ENCODE measurements at regions of chr1 and their contacts with region 1.

Region 1: DNA sequence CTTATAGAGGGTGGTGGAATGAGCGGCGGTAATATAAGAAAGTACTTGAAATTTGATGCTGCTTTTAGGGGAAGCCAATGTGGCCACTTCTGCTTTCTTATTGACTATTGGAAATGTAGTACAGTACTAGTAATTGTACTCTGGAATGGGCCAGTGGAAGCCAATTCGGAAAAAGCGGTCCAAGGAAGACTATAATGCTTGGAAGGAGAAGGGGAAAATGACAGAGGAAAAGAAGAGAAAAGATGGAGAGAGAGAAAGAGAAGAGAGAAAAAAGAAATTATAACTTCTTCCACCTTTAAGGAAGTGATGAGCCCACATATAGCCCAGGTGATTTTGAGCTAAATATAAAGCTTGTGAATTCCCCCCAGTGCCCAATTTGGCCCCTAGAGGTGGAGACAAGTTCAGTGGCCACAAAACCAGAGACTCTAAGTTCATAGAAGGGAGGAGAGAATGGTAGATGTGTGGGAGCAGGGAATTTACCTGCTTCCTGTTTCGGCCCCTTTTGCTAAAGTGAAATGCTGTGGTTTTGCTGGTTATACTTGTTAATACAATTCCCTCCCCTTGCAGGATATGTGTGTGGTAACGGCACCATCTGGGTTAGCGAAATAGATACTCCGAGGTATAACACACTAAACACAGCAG is 35.7 kb upstream of the DUSP10 start:
- DNase-seq: peak in 7 of 9 donors; percentile 14 to 58 (median 32)
- ATAC-seq: peak; percentile 79
- H3K4me3 ChIP-seq: peak overlapping the region; percentile 19
- H3K4me3 Mint-ChIP-seq: peak overlapping the region; percentile 1 to 82 (median 56)
- H3K27ac ChIP-seq: no peak overlapping the region
- H3K27ac Mint-ChIP-seq: peak overlapping the region; percentile 56 to 90 (median 74)
- H3K4me1 ChIP-seq: peaks cover 37 to 38% of the 10 kb centered on the region in 2 donors
- H3K4me1 Mint-ChIP-seq: peaks cover 40 to 83% (median 51%) of the 10 kb centered on the region in 7 donors
- H3K27me3 ChIP-seq: no peaks in the 10 kb centered on the region
- H3K27me3 Mint-ChIP-seq: no peaks in the 10 kb centered on the region

Region 2: DNA sequence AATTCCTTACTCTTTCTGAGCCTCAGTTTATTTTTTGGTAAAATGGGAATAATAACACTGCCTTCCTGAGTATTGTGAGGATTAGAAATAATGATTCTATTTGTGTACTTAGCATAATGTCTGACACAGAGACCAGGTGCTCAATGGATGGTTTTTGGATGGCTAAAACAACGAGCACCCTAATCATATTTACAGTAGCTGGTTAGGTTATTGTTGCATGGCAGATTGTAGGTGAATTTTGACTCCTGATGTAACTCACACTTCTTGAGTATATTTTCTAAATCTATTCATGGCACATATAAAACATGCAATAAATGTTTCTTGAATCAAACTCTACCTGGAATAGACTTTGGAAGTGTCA is 23.7 kb before region 1 on chr1:
- CTCF ChIA-PET with region 1: no interaction called
- POLR2A ChIA-PET with region 1: no interaction called
- intact Hi-C with region 1: loop called in 1 of 2 experiments (anchors 1 kb)
- DNase-seq: no peak
- ATAC-seq: no peak
- H3K4me3 ChIP-seq: no peak overlapping the region
- H3K4me3 Mint-ChIP-seq: peak overlapping the region in 1 of 10 donors; percentile 67
- H3K27ac ChIP-seq: no peak overlapping the region
- H3K27ac Mint-ChIP-seq: peak overlapping the region in 1 of 9 donors; percentile 60
- H3K4me1 ChIP-seq: no peaks in the 10 kb centered on the region
- H3K4me1 Mint-ChIP-seq: peaks cover 0 to 59% (median 4%) of the 10 kb centered on the region in 7 donors
- H3K27me3 ChIP-seq: no peaks in the 10 kb centered on the region
- H3K27me3 Mint-ChIP-seq: no peaks in the 10 kb centered on the region

Region 3: GRCh38 chr1:221829327-221830015 is 51.9 kb after region 1 on chr1:
- CTCF ChIA-PET with region 1: no interaction called
- POLR2A ChIA-PET with region 1: no interaction called
- intact Hi-C with region 1: loop called (anchors 1 to 5 kb)
- DNase-seq: peak in 1 of 9 donors; percentile 42
- ATAC-seq: peak; percentile 88
- H3K4me3 ChIP-seq: peak overlapping the region; percentile 16
- H3K4me3 Mint-ChIP-seq: peak overlapping the region in 4 of 10 donors; percentile 3 to 74 (median 44)
- H3K27ac ChIP-seq: no peak overlapping the region
- H3K27ac Mint-ChIP-seq: peak overlapping the region in 3 of 9 donors; percentile 61 to 95 (median 68)
- H3K4me1 ChIP-seq: peaks cover 15 to 36% of the 10 kb centered on the region in 2 donors
- H3K4me1 Mint-ChIP-seq: peaks cover 13 to 79% (median 29%) of the 10 kb centered on the region in 7 donors
- H3K27me3 ChIP-seq: no peaks in the 10 kb centered on the region
- H3K27me3 Mint-ChIP-seq: no peaks in the 10 kb centered on the region

Region 4: DNA sequence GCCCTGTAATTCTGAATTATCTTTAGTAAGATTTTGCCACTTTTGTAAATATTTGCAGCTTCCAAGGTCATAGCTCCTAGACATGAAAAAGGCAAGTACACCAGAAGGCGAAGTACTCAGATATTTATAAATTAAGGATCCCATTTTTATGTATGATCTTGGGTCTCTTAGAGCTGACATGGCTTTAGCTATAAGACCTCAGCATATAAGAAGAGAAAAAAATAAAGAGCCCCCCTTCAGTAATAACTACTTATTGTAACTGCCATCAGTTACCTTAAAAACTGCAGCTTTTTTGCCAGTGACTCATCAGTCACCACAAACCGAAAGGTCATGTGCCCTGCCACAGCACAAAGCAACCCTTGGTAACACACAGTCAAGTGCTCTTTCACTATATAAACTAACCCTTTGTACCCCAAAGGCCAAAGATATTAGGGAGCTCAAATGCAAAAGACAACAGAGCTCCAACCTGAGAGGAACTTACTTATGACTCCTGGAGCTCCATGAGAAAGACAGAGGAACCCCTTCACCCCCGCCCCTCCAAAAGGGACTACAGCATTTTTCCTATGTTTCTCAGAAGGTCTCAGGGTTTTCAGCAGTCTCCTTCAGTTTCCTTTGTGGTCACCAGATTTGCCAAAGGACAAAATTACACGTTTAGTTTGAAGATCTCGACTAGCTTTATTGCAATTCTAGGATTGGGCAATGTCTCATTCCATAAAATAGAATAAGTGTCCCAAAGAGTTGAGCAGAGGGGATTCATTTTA is 184.2 kb after region 1 on chr1:
- CTCF ChIA-PET with region 1: no interaction called
- POLR2A ChIA-PET with region 1: no interaction called
- intact Hi-C with region 1: loop called in 1 of 2 experiments (anchors 5 kb)
- DNase-seq: peak in 1 of 9 donors; percentile 57
- ATAC-seq: peak; percentile 67
- H3K4me3 ChIP-seq: no peak overlapping the region
- H3K4me3 Mint-ChIP-seq: peak overlapping the region in 1 of 10 donors; percentile 34
- H3K27ac ChIP-seq: no peak overlapping the region
- H3K27ac Mint-ChIP-seq: peak overlapping the region in 1 of 9 donors; percentile 54
- H3K4me1 ChIP-seq: no peaks in the 10 kb centered on the region
- H3K4me1 Mint-ChIP-seq: peaks cover 0 to 20% (median 3%) of the 10 kb centered on the region in 7 donors
- H3K27me3 ChIP-seq: no peaks in the 10 kb centered on the region
- H3K27me3 Mint-ChIP-seq: no peaks in the 10 kb centered on the region

Region 5: GRCh38 chr1:223486365-223486764 is 1708.8 kb after region 1 on chr1:
- CTCF ChIA-PET with region 1: no interaction called
- POLR2A ChIA-PET with region 1: no interaction called
- intact Hi-C with region 1: no loop called
- DNase-seq: peak in 2 of 9 donors; percentile 5 to 19
- ATAC-seq: no peak
- H3K4me3 ChIP-seq: no peak overlapping the region
- H3K4me3 Mint-ChIP-seq: no peak overlapping the region
- H3K27ac ChIP-seq: no peak overlapping the region
- H3K27ac Mint-ChIP-seq: peak overlapping the region in 1 of 9 donors; percentile 14
- H3K4me1 ChIP-seq: no peaks in the 10 kb centered on the region
- H3K4me1 Mint-ChIP-seq: peaks cover 0 to 23% (median 9%) of the 10 kb centered on the region in 7 donors
- H3K27me3 ChIP-seq: no peaks in the 10 kb centered on the region
- H3K27me3 Mint-ChIP-seq: peaks cover 0 to 17% (median 0%) of the 10 kb centered on the region in 5 donors

Measured in naive thymus-derived CD4-positive, alpha-beta T cell (primary cell).